Activated B cell treated with CpG ODN at 0.5 μM for 24 hours (primary cell): ENCODE measurements at regions of chr16 and their contacts with region 1.

Region 1: DNA sequence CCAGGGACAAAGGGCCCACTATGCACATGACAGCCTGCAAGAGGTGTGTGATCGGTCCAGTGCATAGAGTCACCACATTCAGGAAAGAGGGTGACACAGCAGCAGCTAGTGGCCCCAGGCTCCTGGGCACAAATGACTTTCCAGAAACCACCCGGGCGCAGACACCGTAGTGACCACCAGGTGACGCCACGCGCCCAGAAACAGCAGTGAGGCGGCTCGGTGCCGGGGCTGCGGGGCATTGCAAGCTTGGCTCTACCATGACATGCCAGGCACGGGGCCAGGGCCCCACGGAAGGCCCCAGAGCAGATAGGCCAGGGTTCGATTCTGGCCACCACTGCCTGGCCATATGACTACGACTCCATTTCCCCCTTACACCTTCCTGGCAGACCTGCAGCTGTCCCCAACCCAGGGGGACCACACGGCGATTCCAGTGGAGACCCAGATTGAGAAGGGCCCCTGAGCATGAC is 6.7 kb downstream of the RHBDF1 start:
- DNase-seq: peak; percentile 81
- ATAC-seq: peak; percentile 97
- H3K4me3 Mint-ChIP-seq: no peak overlapping the region
- H3K27ac Mint-ChIP-seq: no peak overlapping the region
- H3K4me1 Mint-ChIP-seq: peaks cover 4% of the 10 kb centered on the region
- H3K27me3 Mint-ChIP-seq: peaks cover 6% of the 10 kb centered on the region
- CTCF ChIP-seq: peak; percentile 50

Region 2: DNA sequence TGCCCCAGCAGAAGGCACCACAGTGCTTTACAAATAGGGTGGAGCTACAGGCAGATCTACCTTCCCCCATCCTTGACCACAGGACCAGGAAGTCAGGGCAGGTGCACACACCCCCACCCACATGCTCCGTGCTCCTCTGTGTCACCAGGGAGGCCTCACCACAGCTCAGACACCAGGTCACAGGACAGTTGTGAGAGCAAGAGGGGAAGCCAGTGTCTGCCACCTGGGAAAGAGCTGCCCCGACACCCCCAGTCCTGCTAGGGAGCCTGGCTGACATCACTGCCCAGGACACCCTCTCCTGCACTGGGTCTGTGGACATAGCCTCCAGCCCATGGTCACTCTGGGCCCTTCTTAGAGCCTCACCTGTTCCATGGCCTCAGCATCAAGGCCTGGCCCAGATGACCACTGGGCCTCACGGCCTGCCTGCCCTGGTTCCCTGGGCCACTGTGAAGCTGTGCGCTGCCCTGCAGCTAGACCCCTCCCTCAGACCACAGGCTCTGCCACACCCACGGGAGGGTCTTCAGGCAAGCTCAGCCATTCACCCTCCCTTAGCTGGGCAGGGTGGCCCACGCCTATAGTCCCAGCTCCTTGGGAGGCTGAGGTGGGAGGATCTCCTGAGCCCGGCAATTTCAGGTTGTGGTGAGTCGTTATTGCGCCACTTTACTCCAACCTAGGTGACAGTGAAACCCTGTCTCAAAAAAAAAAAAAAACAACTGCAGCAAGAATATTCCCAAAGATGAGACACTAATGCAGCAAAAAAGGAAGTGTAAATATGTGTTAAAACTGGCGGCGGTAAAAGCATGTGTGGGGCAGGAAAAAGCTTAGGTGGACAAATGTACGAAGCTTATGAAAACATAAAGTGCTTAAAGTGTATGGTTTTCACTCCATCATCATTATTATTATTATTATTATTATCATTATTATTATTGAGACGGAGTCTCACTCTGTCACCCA is 26.5 kb before region 1 on chr16:
- CTCF ChIA-PET with region 1: interaction called, 10 read pairs
- POLR2A ChIA-PET with region 1: no interaction called
- intact Hi-C with region 1: no loop called
- DNase-seq: peak; percentile 61
- ATAC-seq: peak; percentile 86
- H3K4me3 Mint-ChIP-seq: peak overlapping the region; percentile 57
- H3K27ac Mint-ChIP-seq: peak overlapping the region; percentile 95
- H3K4me1 Mint-ChIP-seq: peaks cover 65% of the 10 kb centered on the region
- H3K27me3 Mint-ChIP-seq: no peaks in the 10 kb centered on the region
- CTCF ChIP-seq: no peak

Region 3: DNA sequence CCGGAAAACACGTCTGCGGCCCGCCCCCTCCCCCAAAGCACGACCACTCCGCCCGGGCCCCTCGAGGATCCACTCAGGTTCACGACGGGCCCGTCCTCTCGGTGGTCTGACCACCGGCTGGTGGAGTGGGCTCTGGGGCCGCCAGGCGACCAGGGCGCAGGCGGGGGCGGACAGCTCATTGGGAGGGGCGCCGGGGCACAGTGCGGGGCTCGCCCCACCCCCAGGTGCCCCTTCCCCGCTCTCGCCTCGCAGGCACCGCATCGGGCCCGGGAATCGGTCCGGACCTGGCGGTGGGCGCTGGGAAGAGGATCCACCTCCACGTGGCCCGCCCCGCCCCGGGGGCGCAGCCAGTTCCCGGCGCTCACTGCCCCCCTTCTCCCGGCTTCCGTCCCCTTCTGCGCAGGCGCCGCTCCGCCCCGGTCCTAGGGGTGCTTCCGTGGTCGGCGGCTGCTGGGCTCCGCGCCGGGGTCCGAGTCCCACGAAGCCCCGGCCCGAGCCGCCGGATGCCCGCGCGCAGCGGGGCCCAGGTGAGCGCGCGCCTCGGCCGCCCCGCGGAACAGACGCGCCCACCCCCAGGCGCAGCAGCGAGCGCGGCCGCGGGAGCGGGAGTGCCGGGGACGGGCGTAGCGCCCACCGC is 12.2 kb after region 1 on chr16 and contains the start of gene MPG:
- CTCF ChIA-PET with region 1: interaction called, 12 read pairs
- POLR2A ChIA-PET with region 1: interaction called, 5 read pairs
- intact Hi-C with region 1: loop called (anchors 1 kb)
- DNase-seq: peak; percentile 86
- ATAC-seq: peak; percentile 88
- H3K4me3 Mint-ChIP-seq: peak within 1 kb of the TSS; percentile 91
- H3K27ac Mint-ChIP-seq: peak within 1 kb of the TSS; percentile 88
- H3K4me1 Mint-ChIP-seq: peaks cover 35% of the 10 kb centered on the region
- H3K27me3 Mint-ChIP-seq: peaks cover 9% of the 10 kb centered on the region
- CTCF ChIP-seq: no peak
- total RNA-seq, gene MPG: 51.7 and 53.6 TPM in 2 replicates

Region 4: DNA sequence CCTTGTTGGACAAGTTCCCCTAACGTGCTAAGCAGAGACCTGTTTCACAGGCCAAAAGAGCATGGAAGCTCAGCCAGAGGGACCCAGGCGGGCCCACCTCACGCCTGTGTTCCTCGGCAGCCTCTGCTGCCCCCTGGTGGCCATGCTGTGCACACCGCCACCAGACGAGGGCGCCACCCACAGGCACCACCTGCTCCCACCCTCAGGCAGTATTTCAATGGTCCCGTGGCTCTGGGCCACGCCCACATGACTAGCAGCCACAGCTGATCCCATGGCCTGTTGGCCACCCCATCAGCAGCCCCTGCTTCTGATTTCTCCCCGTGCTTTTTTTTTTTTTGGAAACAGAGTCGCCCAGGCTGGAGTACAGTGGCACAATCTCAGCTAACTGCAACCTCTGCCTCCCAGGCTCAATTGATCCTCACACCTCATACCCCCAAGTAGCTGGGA is 31.3 kb after region 1 on chr16:
- CTCF ChIA-PET with region 1: interaction called, 218 read pairs
- POLR2A ChIA-PET with region 1: interaction called, 12 read pairs
- intact Hi-C with region 1: loop called (anchors 1 kb)
- DNase-seq: peak; percentile 89
- ATAC-seq: peak; percentile 99
- H3K4me3 Mint-ChIP-seq: no peak overlapping the region
- H3K27ac Mint-ChIP-seq: no peak overlapping the region
- H3K4me1 Mint-ChIP-seq: peaks cover 6% of the 10 kb centered on the region
- H3K27me3 Mint-ChIP-seq: no peaks in the 10 kb centered on the region
- CTCF ChIP-seq: peak; percentile 70

Region 5: DNA sequence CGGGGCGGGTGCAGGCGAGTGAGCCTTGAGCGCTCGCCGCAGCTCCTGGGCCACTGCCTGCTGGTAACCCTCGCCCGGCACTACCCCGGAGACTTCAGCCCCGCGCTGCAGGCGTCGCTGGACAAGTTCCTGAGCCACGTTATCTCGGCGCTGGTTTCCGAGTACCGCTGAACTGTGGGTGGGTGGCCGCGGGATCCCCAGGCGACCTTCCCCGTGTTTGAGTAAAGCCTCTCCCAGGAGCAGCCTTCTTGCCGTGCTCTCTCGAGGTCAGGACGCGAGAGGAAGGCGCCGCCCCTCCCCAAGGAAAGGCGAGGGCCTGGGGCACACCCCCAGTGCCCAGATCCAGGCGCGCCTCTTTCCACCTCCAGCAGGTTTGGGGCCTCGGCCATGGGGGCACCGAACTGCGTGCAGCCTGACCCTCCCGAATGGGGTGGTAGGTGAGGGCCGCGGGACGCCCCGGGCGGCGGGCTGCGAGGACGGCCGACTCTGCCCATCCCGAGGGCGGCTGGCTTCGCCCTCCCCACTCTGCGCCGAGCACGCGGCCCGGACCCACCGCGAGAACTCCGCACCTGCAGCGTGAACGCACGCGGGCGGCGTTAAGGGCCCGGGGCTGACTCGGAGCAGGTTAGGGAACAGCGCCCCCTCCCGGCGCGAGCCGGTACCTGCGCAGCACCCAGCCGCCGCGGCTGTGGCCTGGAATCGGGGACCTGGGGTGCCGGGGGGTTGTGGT is 115.4 kb after region 1 on chr16:
- CTCF ChIA-PET with region 1: no interaction called
- POLR2A ChIA-PET with region 1: interaction called, 3 read pairs
- intact Hi-C with region 1: loop called (anchors 1 kb)
- DNase-seq: peak; percentile 79
- ATAC-seq: peak; percentile 83
- H3K4me3 Mint-ChIP-seq: peak overlapping the region; percentile 19
- H3K27ac Mint-ChIP-seq: no peak overlapping the region
- H3K4me1 Mint-ChIP-seq: peaks cover 10% of the 10 kb centered on the region
- H3K27me3 Mint-ChIP-seq: peaks cover 11% of the 10 kb centered on the region
- CTCF ChIP-seq: peak; percentile 84

Region 6: GRCh38 chr16:200388-200787 is 134.7 kb after region 1 on chr16:
- CTCF ChIA-PET with region 1: no interaction called
- POLR2A ChIA-PET with region 1: no interaction called
- intact Hi-C with region 1: no loop called
- DNase-seq: no peak
- ATAC-seq: no peak
- H3K4me3 Mint-ChIP-seq: no peak overlapping the region
- H3K27ac Mint-ChIP-seq: no peak overlapping the region
- H3K4me1 Mint-ChIP-seq: no peaks in the 10 kb centered on the region
- H3K27me3 Mint-ChIP-seq: no peaks in the 10 kb centered on the region
- CTCF ChIP-seq: no peak